ENCODE measurements at regions of chr16 and their contacts with region 1.

Region 1: GRCh38 chr16:85055503-85056210 is 28.1 kb downstream of the KIAA0513 start:
- DNase-seq: peak; percentile 92
- ATAC-seq: peak; percentile 97
- H3K4me3 ChIP-seq: peak overlapping the region; percentile 51; the same call in 1 of the 2 replicates
- H3K27ac ChIP-seq: peak overlapping the region; percentile 79
- H3K4me1 ChIP-seq: peaks cover 37% of the 10 kb centered on the region
- H3K27me3 ChIP-seq: no peaks in the 10 kb centered on the region
- CTCF ChIP-seq: no peak
- EP300 ChIP-seq: peak; percentile 47 to 60; a peak in 1 of 4 replicates
- POLR2A ChIP-seq: peak; percentile 62; the same call in 1 of the 2 replicates
- RAD21 ChIP-seq: no peak

Region 2: DNA sequence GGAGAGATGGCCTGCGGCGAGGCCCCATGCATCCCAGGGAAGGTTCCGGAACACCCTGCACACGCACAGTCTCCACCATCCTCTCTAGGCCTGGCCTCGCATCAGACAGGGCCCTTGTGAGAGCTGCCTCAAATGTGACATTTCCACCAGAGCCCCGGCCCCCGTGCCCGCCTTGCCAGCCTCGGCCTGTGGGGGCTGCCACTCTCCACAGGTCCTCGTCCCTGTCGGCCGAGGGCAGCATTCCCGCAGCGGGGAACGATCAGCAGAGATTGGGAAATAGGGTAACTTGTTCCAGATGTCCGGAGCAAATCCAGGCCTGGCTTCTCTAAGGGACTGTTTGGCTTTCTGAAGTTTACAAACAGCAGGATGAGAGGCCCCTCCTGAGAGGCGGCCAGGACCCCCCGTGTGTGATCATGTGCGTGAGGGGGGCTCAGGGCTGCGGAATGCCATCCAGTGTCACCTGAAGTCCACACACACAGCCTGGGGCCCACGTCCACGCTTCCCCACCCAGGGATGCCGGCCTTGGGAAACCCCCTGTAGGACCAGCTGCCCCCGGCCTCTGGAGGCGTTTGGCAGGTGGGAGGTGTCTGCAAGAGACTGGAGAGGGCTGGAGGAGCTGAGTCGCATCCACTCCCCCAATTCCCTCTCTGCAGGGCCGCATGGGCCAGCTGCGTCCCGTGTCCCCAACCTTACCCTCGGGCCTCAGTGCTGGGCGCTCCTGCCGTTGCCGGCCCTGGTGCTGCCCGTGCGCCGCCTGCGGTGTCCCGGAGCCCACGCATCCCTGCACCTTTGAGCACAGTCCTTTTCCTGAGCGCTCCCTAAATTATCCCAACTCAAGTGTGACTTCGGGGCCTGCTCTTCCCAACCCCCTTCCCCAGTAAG is 114.7 kb before region 1 on chr16:
- CTCF ChIA-PET with region 1: no interaction called
- POLR2A ChIA-PET with region 1: no interaction called
- RAD21 ChIA-PET with region 1: no interaction called
- SMC1A ChIA-PET with region 1: no interaction called
- in situ Hi-C with region 1: no loop called
- intact Hi-C with region 1: no loop called
- DNase-seq: no peak
- ATAC-seq: no peak
- H3K4me3 ChIP-seq: no peak overlapping the region
- H3K27ac ChIP-seq: no peak overlapping the region
- H3K4me1 ChIP-seq: no peaks in the 10 kb centered on the region
- H3K27me3 ChIP-seq: no peaks in the 10 kb centered on the region
- CTCF ChIP-seq: no peak
- EP300 ChIP-seq: no peak
- POLR2A ChIP-seq: no peak
- RAD21 ChIP-seq: no peak

Region 3: GRCh38 chr16:85002608-85003007 is 53.0 kb before region 1 on chr16:
- CTCF ChIA-PET with region 1: no interaction called
- POLR2A ChIA-PET with region 1: no interaction called
- RAD21 ChIA-PET with region 1: no interaction called
- SMC1A ChIA-PET with region 1: no interaction called
- in situ Hi-C with region 1: no loop called
- intact Hi-C with region 1: no loop called
- DNase-seq: no peak
- ATAC-seq: no peak
- H3K4me3 ChIP-seq: 0 out of 2 replicates have a peak overlapping the region, but pooled peaks have one; percentile 4
- H3K27ac ChIP-seq: no peak overlapping the region
- H3K4me1 ChIP-seq: no peaks in the 10 kb centered on the region; the same call in 1 of the 2 replicates
- H3K27me3 ChIP-seq: no peaks in the 10 kb centered on the region
- CTCF ChIP-seq: no peak
- EP300 ChIP-seq: no peak
- POLR2A ChIP-seq: no peak
- RAD21 ChIP-seq: no peak

Region 4: DNA sequence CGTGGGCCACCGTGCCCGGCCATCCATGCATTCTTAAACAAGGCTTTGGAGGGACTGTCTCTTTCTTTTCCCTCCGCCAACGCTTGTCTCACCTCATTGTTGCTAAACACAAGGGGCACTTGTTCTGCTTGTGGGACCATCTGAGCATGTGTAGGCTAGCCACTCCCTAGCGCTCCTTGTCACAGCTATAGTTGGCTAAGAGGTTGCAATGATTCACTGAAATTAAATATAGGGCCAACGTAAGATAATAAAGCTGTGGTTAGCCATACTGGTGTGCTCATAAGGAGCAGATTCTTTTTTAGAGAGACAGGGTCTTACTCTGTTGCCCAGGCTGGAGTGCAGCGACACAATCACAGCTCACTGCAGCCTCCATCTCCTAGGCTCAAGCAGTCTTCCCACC is 13.1 kb after region 1 on chr16:
- CTCF ChIA-PET with region 1: interaction called, 10 read pairs
- POLR2A ChIA-PET with region 1: no interaction called
- RAD21 ChIA-PET with region 1: no interaction called
- SMC1A ChIA-PET with region 1: interaction called, 3 read pairs
- in situ Hi-C with region 1: no loop called
- intact Hi-C with region 1: no loop called
- DNase-seq: no peak
- ATAC-seq: no peak
- H3K4me3 ChIP-seq: no peak overlapping the region
- H3K27ac ChIP-seq: no peak overlapping the region
- H3K4me1 ChIP-seq: no peaks in the 10 kb centered on the region
- H3K27me3 ChIP-seq: no peaks in the 10 kb centered on the region
- CTCF ChIP-seq: no peak
- EP300 ChIP-seq: no peak
- POLR2A ChIP-seq: no peak
- RAD21 ChIP-seq: no peak

Region 5: DNA sequence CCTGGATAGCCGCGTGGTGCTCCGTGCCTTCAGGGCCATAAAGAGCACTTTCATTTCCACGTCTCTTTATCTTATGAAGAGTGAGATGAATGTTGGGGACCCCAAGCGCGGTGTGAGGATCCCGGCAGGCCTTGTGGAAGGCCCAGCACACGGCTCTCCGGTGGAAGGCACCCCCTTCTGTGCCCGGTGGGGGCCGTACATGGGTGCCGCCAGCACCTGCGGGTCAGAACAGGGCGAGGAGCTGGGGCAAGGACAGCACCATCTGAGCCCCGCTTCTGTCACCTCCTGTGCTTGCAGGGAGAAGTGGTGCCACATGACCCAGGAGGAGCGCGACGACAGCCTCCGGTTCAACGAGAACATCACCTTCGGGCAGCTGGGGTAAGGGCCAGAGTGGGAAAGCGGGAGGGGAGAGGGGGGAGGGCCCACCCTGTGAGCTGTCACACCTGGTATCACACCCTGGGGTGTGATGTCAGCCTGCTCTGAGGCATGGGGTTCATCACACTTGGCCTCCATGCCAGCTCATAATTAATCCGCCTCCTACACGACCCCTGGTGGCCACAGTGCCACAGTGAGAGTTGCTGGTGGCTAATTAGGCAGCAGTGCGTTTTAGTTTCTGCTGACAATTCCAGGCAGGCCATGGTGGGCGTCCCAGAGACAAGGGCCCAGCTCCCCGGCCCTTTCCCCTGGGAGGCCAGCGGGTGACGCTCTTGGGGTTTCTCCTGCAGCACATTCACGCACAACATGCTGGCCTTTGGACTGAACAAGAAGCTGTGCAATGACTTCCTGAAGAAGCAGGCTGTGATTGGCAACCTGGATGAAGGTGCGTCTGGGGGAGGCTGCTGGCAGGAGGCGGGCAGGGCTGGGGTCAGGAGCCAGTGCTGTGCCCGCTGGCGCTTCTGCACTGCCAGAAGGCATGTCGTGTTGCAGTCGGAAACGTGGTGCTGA is 31.0 kb after region 1 on chr16:
- CTCF ChIA-PET with region 1: interaction called, 27 read pairs
- POLR2A ChIA-PET with region 1: no interaction called
- RAD21 ChIA-PET with region 1: interaction called, 8 read pairs
- SMC1A ChIA-PET with region 1: interaction called, 6 read pairs
- in situ Hi-C with region 1: no loop called
- intact Hi-C with region 1: loop called (anchors 2 kb)
- DNase-seq: no peak
- ATAC-seq: peak; percentile 91
- H3K4me3 ChIP-seq: no peak overlapping the region
- H3K27ac ChIP-seq: no peak overlapping the region
- H3K4me1 ChIP-seq: peaks cover 30% of the 10 kb centered on the region
- H3K27me3 ChIP-seq: no peaks in the 10 kb centered on the region
- CTCF ChIP-seq: peak; percentile 75 to 81 (median 79)
- EP300 ChIP-seq: no peak
- POLR2A ChIP-seq: no peak
- RAD21 ChIP-seq: peak; percentile 82

Region 6: DNA sequence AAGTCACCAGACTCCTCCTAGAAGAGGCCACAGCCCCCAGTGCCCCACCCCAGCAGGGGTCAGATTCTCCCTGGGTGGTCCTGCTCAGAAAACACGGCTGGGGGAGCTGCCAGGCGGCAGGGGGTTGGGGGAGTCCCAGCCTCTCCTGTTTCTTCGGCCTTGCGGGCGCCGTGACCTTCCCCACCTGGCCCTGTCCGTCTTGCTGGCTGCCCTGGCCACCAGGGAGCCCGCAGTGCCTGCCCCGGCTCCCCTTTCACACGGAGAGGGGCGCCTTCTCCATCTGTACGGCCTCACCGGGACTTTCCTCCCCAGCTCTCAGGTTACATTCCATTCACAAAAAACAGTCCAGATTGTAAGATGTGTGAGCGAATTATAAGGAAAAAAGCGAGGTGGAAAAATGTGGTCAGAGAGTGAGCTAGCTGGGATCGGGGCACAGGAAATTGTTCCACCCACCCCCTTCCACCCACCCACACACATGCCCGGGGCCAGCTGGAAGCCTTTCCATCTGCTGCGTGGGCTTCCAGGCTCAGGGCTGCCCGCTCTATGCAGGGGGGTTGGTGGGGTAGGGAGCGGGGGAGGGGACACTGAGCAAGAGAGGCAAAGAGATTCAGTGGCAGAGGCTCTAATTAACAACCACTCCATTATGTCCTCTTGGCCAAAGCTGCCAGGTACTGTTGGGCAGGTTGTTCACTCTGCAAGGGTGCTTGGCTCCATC is 71.2 kb after region 1 on chr16:
- CTCF ChIA-PET with region 1: no interaction called
- POLR2A ChIA-PET with region 1: no interaction called
- RAD21 ChIA-PET with region 1: no interaction called
- SMC1A ChIA-PET with region 1: no interaction called
- in situ Hi-C with region 1: no loop called
- intact Hi-C with region 1: no loop called
- DNase-seq: no peak
- ATAC-seq: peak; percentile 41
- H3K4me3 ChIP-seq: no peak overlapping the region
- H3K27ac ChIP-seq: no peak overlapping the region
- H3K4me1 ChIP-seq: no peaks in the 10 kb centered on the region
- H3K27me3 ChIP-seq: no peaks in the 10 kb centered on the region
- CTCF ChIP-seq: no peak
- EP300 ChIP-seq: no peak
- POLR2A ChIP-seq: no peak
- RAD21 ChIP-seq: no peak

Measured in GM12878 (cell line).